ENCODE measurements at regions of chr1 and their contacts with region 1.

Region 1: DNA sequence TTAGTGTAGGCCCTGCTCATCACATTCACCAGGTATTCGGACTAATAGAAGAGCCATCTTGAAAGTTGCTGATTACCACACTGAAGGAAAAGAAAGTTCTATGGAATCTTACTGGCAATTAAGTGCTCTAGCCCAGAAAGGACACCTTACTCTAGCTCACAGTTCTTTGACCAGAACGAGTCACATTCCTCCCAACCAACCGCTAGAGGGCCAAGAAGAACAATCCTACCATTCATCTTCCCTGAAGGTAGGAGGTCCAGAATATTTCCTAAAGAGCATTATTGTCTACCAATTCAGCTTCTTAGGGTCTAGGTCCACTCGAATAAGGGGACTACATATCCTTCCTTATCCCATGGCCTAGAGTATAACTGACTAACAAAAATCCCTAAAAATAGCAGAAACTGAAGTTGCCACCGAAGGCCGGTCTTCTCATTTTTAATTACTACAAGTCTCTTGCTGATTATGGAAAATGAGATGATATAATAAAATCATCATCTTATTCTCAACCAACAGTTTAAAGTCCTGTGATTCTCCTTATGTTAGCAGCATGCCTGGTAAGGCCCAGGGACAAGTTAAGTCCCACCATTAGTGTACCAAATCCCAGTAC is 2.7 kb upstream of the FMO1 start:
- DNase-seq: peak; percentile 38
- CTCF ChIP-seq: peak; percentile 71

Region 2: GRCh38 chr1:171179318-171180227 is 66.0 kb before region 1 on chr1:
- CTCF ChIA-PET with region 1: no interaction called
- POLR2A ChIA-PET with region 1: no interaction called
- DNase-seq: no peak
- CTCF ChIP-seq: no peak

Region 3: DNA sequence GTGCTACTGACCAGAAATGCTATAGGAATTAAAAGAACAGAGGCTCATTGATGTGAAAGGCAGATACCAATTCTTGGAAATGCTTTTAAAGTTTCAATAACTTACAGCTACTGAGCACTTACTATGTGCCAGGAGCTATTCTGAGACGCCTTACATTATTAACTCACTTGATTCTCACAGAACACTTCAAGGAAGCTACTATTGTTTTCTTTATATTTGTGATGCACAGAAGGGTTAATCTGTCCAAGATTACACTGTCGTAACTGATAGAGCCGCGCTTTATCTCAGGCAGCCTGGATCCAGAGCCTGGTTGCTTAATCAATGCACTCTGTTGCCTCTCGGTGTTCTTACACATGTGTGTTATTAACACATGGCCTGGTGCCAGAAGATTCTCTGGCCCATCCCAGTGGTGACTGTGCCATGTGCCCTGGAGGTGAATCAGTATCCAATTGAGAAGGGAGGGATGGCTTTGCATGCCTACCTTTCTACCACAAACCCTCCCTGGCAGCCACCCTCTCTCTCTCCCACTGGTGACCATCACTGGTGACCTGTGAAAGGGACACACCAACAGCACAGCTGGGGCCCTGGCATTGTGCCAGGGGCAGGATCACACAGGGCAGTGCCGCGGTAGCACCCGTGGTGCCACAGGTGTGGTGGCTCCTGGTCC is 11.5 kb after region 1 on chr1:
- CTCF ChIA-PET with region 1: interaction called, 18 read pairs
- POLR2A ChIA-PET with region 1: no interaction called
- DNase-seq: no peak
- CTCF ChIP-seq: no peak